ENCODE measurements at regions of chr3 and their contacts with region 1.

Region 1: GRCh38 chr3:128095222-128095703 is 28.3 kb downstream of the RUVBL1 start:
- DNase-seq: peak; percentile 80 to 90 (median 81)
- ATAC-seq: peak; percentile 97 to 98 (median 97)
- H3K4me3 ChIP-seq: no peak overlapping the region
- H3K27ac ChIP-seq: peak overlapping the region in 1 of 12 donors; percentile 37
- H3K4me1 ChIP-seq: peaks cover 0 to 14% (median 1%) of the 10 kb centered on the region in 12 donors
- H3K27me3 ChIP-seq: no peaks in the 10 kb centered on the region
- CTCF ChIP-seq: peak; percentile 67 to 92 (median 84)
- POLR2A ChIP-seq: no peak

Region 2: GRCh38 chr3:128133273-128134084 is 38.2 kb after region 1 on chr3:
- intact Hi-C with region 1: loop called (anchors 1 to 5 kb)
- DNase-seq: no peak
- ATAC-seq: peak; percentile 26 to 75 (median 68)
- H3K4me3 ChIP-seq: no peak overlapping the region
- H3K27ac ChIP-seq: no peak overlapping the region
- H3K4me1 ChIP-seq: no peaks in the 10 kb centered on the region
- H3K27me3 ChIP-seq: no peaks in the 10 kb centered on the region
- CTCF ChIP-seq: peak; percentile 35 to 64 (median 58)
- POLR2A ChIP-seq: no peak

Region 3: DNA sequence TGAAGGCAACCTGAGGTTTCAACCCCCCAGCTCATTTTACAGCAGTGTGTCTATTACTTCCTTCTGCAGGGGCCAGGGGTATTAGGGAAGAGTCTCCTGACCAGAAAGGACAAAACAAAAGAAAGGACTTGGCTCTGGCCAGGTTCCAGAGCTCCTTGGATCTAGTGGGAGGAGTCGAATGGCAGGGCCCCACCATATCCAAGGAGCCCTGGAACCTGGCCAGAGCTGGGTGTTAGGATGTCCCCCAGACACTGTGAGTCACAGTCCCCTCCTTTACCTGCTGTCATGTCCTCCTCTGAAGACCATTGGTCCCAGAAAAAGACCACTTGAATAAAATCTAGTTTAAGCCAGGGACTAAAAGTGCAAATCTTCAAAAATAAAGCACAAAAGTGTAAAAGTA is 171.2 kb after region 1 on chr3:
- intact Hi-C with region 1: no loop called
- DNase-seq: no peak
- ATAC-seq: peak in 2 of 4 donors; percentile 28 to 38
- H3K4me3 ChIP-seq: no peak overlapping the region
- H3K27ac ChIP-seq: no peak overlapping the region
- H3K4me1 ChIP-seq: peaks cover 0 to 10% (median 0%) of the 10 kb centered on the region in 12 donors
- H3K27me3 ChIP-seq: no peaks in the 10 kb centered on the region
- CTCF ChIP-seq: no peak
- POLR2A ChIP-seq: no peak

Region 4: GRCh38 chr3:128322066-128323022 is 227.1 kb after region 1 on chr3:
- intact Hi-C with region 1: loop called in 4 of 10 experiments (anchors 10 kb)
- DNase-seq: peak; percentile 41 to 80 (median 49)
- ATAC-seq: peak; percentile 45 to 72 (median 56)
- H3K4me3 ChIP-seq: no peak overlapping the region
- H3K27ac ChIP-seq: no peak overlapping the region
- H3K4me1 ChIP-seq: peaks cover 0 to 14% (median 0%) of the 10 kb centered on the region in 12 donors
- H3K27me3 ChIP-seq: no peaks in the 10 kb centered on the region
- CTCF ChIP-seq: peak; percentile 34 to 72 (median 56)
- POLR2A ChIP-seq: no peak

Region 5: GRCh38 chr3:128395500-128396162 is 300.4 kb after region 1 on chr3:
- intact Hi-C with region 1: no loop called
- DNase-seq: peak; percentile 73 to 87 (median 79)
- ATAC-seq: peak in 3 of 4 donors; percentile 71 to 85 (median 74)
- H3K4me3 ChIP-seq: no peak overlapping the region
- H3K27ac ChIP-seq: peak overlapping the region in 8 of 12 donors; percentile 6 to 68 (median 32)
- H3K4me1 ChIP-seq: peaks cover 0 to 40% (median 18%) of the 10 kb centered on the region in 12 donors
- H3K27me3 ChIP-seq: no peaks in the 10 kb centered on the region
- CTCF ChIP-seq: no peak
- POLR2A ChIP-seq: no peak

Region 6: GRCh38 chr3:128426128-128426921 is 331.1 kb after region 1 on chr3:
- intact Hi-C with region 1: loop called in 1 of 10 experiments (anchors 5 kb)
- DNase-seq: peak in 4 of 5 donors; percentile 36 to 83 (median 46)
- ATAC-seq: peak; percentile 21 to 93 (median 80)
- H3K4me3 ChIP-seq: peak overlapping the region in 10 of 12 donors; percentile 12 to 50 (median 34)
- H3K27ac ChIP-seq: no peak overlapping the region
- H3K4me1 ChIP-seq: peaks cover 0 to 14% (median 4%) of the 10 kb centered on the region in 12 donors
- H3K27me3 ChIP-seq: peaks cover 0 to 30% (median 1%) of the 10 kb centered on the region in 9 donors
- CTCF ChIP-seq: peak; percentile 52 to 99 (median 89)
- POLR2A ChIP-seq: no peak

Region 7: DNA sequence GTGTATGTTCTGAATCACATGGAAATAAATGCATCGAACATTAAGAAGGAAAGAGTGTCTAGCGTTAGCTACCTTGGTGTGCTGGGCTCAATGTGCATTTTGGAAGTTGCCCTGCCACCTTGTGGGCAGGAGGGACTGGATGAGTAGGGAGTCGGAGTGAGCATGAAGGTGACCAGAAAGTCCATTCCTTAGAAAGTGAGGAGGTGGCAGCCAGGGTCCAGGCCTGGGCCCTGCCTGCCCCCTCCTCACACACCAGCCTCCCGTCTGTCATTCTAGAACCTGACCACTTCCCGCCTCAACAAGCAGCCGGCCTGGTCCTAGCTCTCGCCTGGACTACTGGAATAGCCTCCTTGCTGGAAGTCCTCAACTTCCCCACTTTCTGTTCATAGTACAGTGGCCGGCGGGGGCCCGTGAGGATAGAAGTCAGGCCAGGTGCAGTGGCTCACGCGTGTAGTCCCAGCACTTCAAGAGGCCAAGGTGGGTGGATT is 407.9 kb after region 1 on chr3:
- intact Hi-C with region 1: loop called in 9 of 10 experiments (anchors 2 to 10 kb)
- DNase-seq: no peak
- ATAC-seq: peak in 2 of 4 donors; percentile 23 to 44
- H3K4me3 ChIP-seq: no peak overlapping the region
- H3K27ac ChIP-seq: no peak overlapping the region
- H3K4me1 ChIP-seq: peaks cover 0 to 2% (median 0%) of the 10 kb centered on the region in 12 donors
- H3K27me3 ChIP-seq: peaks cover 0 to 45% (median 8%) of the 10 kb centered on the region in 9 donors
- CTCF ChIP-seq: peak in 5 of 12 donors; percentile 7 to 30 (median 16)
- POLR2A ChIP-seq: no peak

Region 8: GRCh38 chr3:128603811-128604775 is 508.8 kb after region 1 on chr3:
- intact Hi-C with region 1: loop called in 8 of 10 experiments (anchors 1 to 10 kb)
- DNase-seq: no peak
- ATAC-seq: no peak
- H3K4me3 ChIP-seq: no peak overlapping the region
- H3K27ac ChIP-seq: no peak overlapping the region
- H3K4me1 ChIP-seq: peaks cover 0 to 15% (median 7%) of the 10 kb centered on the region in 12 donors
- H3K27me3 ChIP-seq: no peaks in the 10 kb centered on the region
- CTCF ChIP-seq: no peak
- POLR2A ChIP-seq: no peak

Region 9: DNA sequence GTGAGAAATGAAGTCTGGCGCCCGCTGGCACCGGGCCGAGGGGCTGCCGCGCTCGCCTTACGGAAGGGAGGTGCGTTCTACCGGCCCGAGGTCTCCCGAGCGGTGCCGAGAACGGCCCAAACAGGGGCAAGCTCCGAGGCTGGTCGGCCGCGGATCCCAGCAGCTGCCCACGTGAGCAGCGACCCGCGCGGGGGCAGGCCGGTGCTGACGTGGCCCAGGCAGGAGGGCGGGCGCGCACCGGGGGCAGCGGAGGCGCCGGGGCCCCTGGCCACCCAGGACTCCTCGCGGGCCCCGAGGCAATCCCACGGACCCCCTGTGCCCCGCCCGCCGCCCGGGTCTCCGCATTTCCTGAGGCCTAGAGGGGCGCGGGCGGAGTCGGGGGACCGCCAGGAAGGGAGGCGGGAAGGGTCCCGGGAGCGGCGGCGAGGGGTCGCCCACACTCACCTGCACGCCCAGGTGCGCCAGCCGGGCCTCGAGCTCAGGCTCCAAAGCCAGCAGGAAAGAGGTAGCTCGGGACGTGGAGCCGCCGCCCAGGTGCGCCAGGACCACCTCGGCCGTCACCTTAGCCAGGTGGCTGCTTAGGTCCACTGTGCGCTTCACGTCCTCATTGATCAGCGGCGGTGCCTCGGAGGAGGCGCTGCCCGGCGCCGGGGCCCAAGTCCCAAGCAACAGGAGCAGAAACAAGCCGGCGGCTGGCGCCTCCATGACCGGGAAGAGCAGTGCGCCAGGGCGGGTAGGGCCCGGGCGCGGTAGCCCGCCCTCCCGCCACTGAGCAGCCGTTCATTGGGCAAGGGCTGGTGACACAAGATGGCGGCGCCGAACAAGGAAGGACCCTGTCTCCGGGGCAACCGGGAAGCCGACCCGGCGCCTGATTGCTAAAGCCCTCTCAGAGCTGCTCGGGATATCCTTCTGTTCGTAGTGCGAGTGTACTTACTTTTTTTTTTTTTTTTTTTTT is 555.1 kb after region 1 on chr3 and contains the start of gene RPN1:
- intact Hi-C with region 1: no loop called
- DNase-seq: peak; percentile 97 to 98 (median 98)
- ATAC-seq: peak; percentile 98 to 100 (median 100)
- H3K4me3 ChIP-seq: peak within 1 kb of the TSS; percentile 76 to 100 (median 92)
- H3K27ac ChIP-seq: peak within 1 kb of the TSS; percentile 92 to 99 (median 98)
- H3K4me1 ChIP-seq: peaks cover 5 to 36% (median 18%) of the 10 kb centered on the region in 12 donors
- H3K27me3 ChIP-seq: no peaks in the 10 kb centered on the region
- CTCF ChIP-seq: peak in 1 of 12 donors; percentile 7
- POLR2A ChIP-seq: peak; percentile 48 to 71
- total RNA-seq, gene RPN1: 71.7 to 161 (median 119) TPM